ENCODE measurements at regions of chr1 and their contacts with region 1.

Region 1: GRCh38 chr1:202348509-202349205 is at the start of gene PPP1R12B:
- DNase-seq: peak; percentile 83 to 95 (median 92)
- ATAC-seq: peak; percentile 98
- H3K4me3 ChIP-seq: peak within 1 kb of the TSS; percentile 82
- H3K4me3 Mint-ChIP-seq: peak within 1 kb of the TSS; percentile 87 to 97 (median 93)
- H3K27ac ChIP-seq: peak within 1 kb of the TSS; percentile 73
- H3K27ac Mint-ChIP-seq: peak within 1 kb of the TSS; percentile 64 to 97 (median 86)
- H3K4me1 ChIP-seq: peaks cover 3 to 16% of the 10 kb centered on the region in 2 donors
- H3K4me1 Mint-ChIP-seq: peaks cover 22 to 40% (median 34%) of the 10 kb centered on the region in 7 donors
- H3K27me3 ChIP-seq: no peaks in the 10 kb centered on the region
- H3K27me3 Mint-ChIP-seq: no peaks in the 10 kb centered on the region
- total RNA-seq, gene PPP1R12B: 23.6 to 38.1 (median 31.0) TPM

Region 2: DNA sequence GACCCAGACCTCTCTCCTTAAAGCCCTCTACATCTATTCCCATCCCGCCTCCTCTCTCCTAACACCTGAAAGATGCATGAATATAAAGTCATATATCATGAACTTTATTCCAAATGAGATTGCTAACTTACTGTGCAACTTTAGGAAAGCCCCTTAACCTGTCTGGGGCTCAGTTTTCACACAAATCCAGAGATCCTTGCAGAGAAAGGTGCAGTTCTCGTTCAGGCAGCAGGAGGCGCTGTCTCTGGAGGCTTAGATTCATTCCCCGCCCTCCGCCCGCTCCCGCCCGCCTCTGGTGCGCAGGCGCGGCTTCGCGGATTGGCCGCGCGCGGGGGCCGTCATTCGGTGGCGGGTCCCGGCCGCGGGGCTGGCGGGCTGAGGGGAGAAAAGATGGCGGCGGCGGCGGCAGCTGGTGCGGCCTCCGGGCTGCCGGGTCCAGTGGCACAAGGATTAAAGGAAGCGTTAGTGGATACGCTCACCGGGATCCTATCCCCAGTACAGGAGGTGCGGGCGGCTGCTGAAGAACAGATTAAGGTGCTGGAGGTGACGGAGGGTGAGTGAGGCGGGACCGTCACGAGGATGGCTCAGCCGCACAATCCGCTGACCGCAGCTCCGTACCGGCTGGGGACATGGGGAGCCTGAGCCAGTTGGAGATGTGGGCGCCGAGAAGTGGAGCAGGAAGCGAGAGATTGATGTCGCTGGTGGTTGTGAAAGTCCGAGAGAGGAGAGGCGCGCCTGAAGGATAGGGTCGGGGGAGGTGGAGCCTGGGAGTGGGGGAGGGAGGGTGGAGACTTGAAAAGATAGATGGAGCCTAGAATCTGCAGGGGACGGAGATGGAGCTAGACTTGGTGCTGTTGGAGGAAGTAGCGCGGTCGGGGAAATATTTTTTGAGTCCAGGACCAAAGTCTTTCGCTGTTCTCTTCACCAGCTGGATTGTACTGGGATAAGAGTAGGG is 519.6 kb before region 1 on chr1 and contains the start of gene IPO9:
- CTCF ChIA-PET with region 1: no interaction called
- POLR2A ChIA-PET with region 1: no interaction called
- intact Hi-C with region 1: loop called in 1 of 2 experiments (anchors 2 kb)
- DNase-seq: peak; percentile 89 to 96 (median 95)
- ATAC-seq: peak; percentile 98
- H3K4me3 ChIP-seq: peak within 1 kb of the TSS; percentile 97
- H3K4me3 Mint-ChIP-seq: peak within 1 kb of the TSS; percentile 90 to 100 (median 96)
- H3K27ac ChIP-seq: peak within 1 kb of the TSS; percentile 93
- H3K27ac Mint-ChIP-seq: peak within 1 kb of the TSS; percentile 80 to 97 (median 91)
- H3K4me1 ChIP-seq: peaks cover 16 to 19% of the 10 kb centered on the region in 2 donors
- H3K4me1 Mint-ChIP-seq: peaks cover 29 to 55% (median 41%) of the 10 kb centered on the region in 7 donors
- H3K27me3 ChIP-seq: no peaks in the 10 kb centered on the region
- H3K27me3 Mint-ChIP-seq: no peaks in the 10 kb centered on the region
- total RNA-seq, gene IPO9: 28.7 to 55.3 (median 37.9) TPM

Region 3: DNA sequence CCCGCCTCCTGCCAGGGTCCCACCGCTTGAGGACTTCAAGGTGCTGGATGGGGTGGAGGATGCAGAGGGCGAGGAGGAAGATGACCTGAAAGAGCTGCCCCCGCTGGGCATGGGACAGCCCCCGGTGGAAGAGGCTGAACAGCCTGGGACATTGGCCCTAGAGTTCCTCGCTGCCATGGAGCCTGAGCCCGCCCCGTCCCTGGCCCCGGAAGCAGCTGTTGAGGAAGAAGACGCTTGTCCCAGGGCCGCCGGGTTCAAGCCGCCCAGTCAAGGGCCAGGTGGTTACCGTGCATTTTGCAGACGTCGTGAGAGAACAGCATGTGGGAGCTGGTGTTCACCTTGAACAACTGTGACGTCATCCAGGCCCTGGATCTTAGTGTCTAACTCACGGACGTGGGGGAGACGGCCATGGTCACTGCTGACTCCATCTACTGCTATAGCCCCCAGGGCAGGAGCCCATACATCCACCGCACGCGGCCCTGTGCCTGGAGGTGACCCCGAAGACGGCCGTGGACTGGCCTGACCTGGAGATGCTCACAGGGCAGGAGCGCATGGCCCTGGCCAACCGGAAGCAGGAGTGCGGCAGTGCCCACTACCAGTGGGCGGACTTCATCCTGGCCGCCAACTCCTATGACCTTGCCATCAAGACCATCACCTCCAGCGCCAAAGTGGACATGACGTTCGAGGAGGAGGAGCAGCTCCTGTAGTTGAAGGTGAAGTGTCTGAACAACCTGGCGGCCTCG is 89.9 kb after region 1 on chr1:
- CTCF ChIA-PET with region 1: no interaction called
- POLR2A ChIA-PET with region 1: no interaction called
- intact Hi-C with region 1: loop called in 1 of 2 experiments (anchors 10 kb)
- DNase-seq: no peak
- ATAC-seq: no peak
- H3K4me3 ChIP-seq: no peak overlapping the region
- H3K4me3 Mint-ChIP-seq: no peak overlapping the region
- H3K27ac ChIP-seq: no peak overlapping the region
- H3K27ac Mint-ChIP-seq: no peak overlapping the region
- H3K4me1 ChIP-seq: no peaks in the 10 kb centered on the region
- H3K4me1 Mint-ChIP-seq: no peaks in the 10 kb centered on the region
- H3K27me3 ChIP-seq: no peaks in the 10 kb centered on the region
- H3K27me3 Mint-ChIP-seq: no peaks in the 10 kb centered on the region

Region 4: DNA sequence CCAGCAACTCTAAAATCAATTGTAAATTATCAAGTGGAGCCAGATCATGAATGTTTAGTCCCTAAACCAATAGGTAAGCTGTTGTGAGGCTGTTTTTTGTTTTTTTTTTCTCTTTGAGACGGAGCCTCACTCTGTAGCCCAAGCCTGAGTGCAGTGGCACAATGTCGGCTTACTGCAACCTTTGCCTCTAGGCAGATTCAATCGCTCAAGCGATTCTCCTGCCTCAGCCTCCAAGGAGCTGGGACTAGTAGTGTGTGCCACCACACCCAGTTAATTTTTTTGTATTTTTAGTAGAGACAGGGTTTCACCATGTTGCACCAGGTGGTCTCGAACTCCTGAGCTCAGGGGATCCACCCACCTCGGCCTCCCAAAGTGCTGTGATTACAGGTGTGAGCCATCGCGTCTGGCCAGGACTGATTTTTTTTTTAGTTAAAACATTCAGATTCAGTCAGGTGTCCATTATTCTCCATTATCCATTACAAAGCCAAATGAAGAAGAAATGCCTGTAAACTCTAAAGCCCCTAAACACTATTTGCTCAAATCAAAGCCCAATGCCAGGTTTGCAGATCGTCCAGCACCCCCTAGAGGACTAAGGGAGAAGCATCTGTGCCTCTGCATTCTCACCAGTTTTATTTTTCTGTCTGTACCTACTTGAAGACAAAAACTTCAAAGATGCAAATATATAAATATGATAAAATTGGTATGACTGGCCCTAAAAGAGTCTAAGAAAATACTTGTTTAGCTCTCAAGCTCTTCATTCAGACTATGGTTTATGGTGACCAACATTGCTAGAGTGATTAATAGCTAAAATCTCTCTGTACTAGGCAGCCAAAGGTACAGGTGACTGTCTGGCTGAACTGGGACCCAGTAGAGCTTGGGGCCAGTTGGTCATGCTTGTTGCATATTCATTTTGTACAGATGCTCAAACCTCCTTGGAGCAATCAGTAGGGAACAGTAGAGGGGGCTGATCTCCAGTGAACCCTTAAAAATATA is 223.0 kb after region 1 on chr1:
- CTCF ChIA-PET with region 1: no interaction called
- POLR2A ChIA-PET with region 1: no interaction called
- intact Hi-C with region 1: loop called in 1 of 2 experiments (anchors 2 kb)
- DNase-seq: peak in 5 of 9 donors; percentile 3 to 12 (median 5)
- ATAC-seq: no peak
- H3K4me3 ChIP-seq: no peak overlapping the region
- H3K4me3 Mint-ChIP-seq: no peak overlapping the region
- H3K27ac ChIP-seq: no peak overlapping the region
- H3K27ac Mint-ChIP-seq: no peak overlapping the region
- H3K4me1 ChIP-seq: no peaks in the 10 kb centered on the region
- H3K4me1 Mint-ChIP-seq: peaks cover 0 to 6% (median 0%) of the 10 kb centered on the region in 7 donors
- H3K27me3 ChIP-seq: no peaks in the 10 kb centered on the region
- H3K27me3 Mint-ChIP-seq: no peaks in the 10 kb centered on the region

Region 5: GRCh38 chr1:202625416-202626360 is 277.0 kb after region 1 on chr1:
- CTCF ChIA-PET with region 1: interaction called, 3 read pairs
- POLR2A ChIA-PET with region 1: no interaction called
- intact Hi-C with region 1: loop called (anchors 2 to 5 kb)
- DNase-seq: peak; percentile 21 to 61 (median 47)
- ATAC-seq: peak; percentile 75
- H3K4me3 ChIP-seq: no peak overlapping the region
- H3K4me3 Mint-ChIP-seq: peak overlapping the region in 1 of 10 donors; percentile 31
- H3K27ac ChIP-seq: no peak overlapping the region
- H3K27ac Mint-ChIP-seq: no peak overlapping the region
- H3K4me1 ChIP-seq: peaks cover 30 to 34% of the 10 kb centered on the region in 2 donors
- H3K4me1 Mint-ChIP-seq: peaks cover 18 to 39% (median 36%) of the 10 kb centered on the region in 7 donors
- H3K27me3 ChIP-seq: no peaks in the 10 kb centered on the region
- H3K27me3 Mint-ChIP-seq: peaks cover 9 to 21% (median 14%) of the 10 kb centered on the region in 5 donors

Region 6: DNA sequence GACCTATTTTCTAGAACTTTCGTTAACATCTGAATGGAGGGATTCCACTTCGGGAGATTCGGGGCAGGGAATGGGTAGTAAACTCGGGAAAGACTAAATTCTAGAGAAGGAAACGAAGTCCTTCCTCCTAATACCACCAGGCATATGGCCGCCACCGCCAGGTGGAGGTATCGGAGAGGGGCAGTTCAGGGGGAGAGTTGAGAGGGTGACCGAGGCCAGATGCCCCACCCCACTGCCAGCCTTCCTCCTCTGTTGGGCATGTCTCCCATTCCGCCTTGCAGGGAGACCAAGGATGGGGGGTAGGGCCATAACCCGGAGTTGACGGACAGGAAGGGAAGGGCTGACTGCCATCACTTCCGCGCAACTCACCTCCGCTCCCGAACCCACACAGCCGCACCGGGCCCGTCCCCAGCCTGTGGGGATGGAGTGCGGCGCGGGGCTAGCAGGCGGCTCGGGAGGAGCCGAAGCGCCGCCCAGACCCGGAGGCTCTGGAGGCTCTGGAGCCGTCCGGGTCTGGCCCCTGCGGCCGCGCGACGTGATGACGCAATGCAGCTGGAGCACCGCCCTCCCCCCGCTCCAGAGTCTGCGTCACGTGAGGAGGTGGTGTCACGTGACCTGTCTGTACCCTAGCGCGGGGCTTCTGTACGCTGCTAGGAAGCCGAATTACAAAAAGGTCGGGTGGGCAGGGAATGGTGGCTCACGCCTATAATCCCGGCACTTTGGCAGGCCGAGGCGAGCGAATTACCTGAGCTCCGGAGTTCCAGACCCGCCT is 578.2 kb after region 1 on chr1 and contains the start of gene KLHL12:
- CTCF ChIA-PET with region 1: no interaction called
- POLR2A ChIA-PET with region 1: no interaction called
- intact Hi-C with region 1: loop called in 1 of 2 experiments (anchors 1 kb)
- DNase-seq: peak; percentile 88 to 95 (median 94)
- ATAC-seq: peak; percentile 97
- H3K4me3 ChIP-seq: peak within 1 kb of the TSS; percentile 97
- H3K4me3 Mint-ChIP-seq: peak within 1 kb of the TSS; percentile 90 to 96 (median 94)
- H3K27ac ChIP-seq: peak within 1 kb of the TSS; percentile 97
- H3K27ac Mint-ChIP-seq: peak within 1 kb of the TSS; percentile 92 to 97 (median 94)
- H3K4me1 ChIP-seq: peaks cover 19 to 26% of the 10 kb centered on the region in 2 donors
- H3K4me1 Mint-ChIP-seq: peaks cover 17 to 40% (median 34%) of the 10 kb centered on the region in 7 donors
- H3K27me3 ChIP-seq: no peaks in the 10 kb centered on the region
- H3K27me3 Mint-ChIP-seq: peaks cover 0 to 11% (median 0%) of the 10 kb centered on the region in 5 donors
- total RNA-seq, gene KLHL12: 15.6 to 28.0 (median 24.5) TPM

Region 7: DNA sequence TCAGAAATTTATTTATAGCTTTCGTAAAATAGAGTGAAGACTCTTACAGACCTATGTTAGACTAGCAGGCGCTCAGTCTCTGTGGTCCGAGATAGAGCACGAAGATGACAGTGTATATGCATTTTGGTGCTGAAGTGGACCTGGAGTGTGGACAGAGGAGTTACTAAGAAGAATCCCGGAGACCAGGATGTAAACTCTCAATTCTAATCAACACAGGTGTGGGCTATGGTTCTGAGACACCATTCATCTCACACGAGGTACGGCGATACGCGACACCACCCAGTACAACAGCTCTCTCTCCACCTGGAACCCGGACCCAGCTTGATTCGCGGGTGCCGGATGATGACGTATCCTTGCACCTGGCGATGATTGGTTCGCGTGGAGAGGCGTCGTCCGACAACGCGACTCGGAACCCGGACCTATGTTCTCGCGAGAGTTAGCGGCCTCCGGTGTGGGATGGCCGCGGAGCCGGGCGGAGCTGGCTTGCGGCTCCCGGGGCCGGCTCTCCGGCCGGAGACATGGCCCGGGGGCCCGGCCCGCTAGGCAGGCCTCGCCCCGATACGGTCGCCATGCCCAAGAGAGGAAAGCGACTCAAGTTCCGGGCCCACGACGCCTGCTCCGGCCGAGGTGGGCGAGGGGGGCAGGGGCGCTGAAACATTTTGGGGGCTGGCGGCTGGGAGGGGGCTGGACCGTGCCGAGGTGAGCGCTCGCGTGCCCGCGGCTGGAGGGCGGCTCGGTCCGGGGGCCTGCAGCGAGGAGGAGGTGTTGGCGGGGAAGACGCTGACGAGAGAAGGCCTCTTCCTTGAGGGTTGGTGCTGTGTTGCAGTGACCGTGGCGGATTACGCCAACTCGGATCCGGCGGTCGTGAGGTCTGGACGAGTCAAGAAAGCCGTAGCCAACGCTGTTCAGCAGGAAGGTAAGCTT is 658.6 kb after region 1 on chr1 and contains the start of gene TMEM183A:
- CTCF ChIA-PET with region 1: no interaction called
- POLR2A ChIA-PET with region 1: no interaction called
- intact Hi-C with region 1: loop called (anchors 1 kb)
- DNase-seq: peak; percentile 77 to 95 (median 92)
- ATAC-seq: peak; percentile 96
- H3K4me3 ChIP-seq: peak within 1 kb of the TSS; percentile 91
- H3K4me3 Mint-ChIP-seq: peak within 1 kb of the TSS; percentile 91 to 100 (median 96)
- H3K27ac ChIP-seq: peak within 1 kb of the TSS; percentile 90
- H3K27ac Mint-ChIP-seq: peak within 1 kb of the TSS; percentile 93 to 99 (median 98)
- H3K4me1 ChIP-seq: peaks cover 10 to 14% of the 10 kb centered on the region in 2 donors
- H3K4me1 Mint-ChIP-seq: peaks cover 24 to 46% (median 36%) of the 10 kb centered on the region in 7 donors
- H3K27me3 ChIP-seq: no peaks in the 10 kb centered on the region
- H3K27me3 Mint-ChIP-seq: peaks cover 0 to 4% (median 0%) of the 10 kb centered on the region in 5 donors
- total RNA-seq, gene TMEM183A: 61.4 to 134 (median 77.0) TPM